ENCODE measurements at regions of chr7 and their contacts with region 1.

Region 1: DNA sequence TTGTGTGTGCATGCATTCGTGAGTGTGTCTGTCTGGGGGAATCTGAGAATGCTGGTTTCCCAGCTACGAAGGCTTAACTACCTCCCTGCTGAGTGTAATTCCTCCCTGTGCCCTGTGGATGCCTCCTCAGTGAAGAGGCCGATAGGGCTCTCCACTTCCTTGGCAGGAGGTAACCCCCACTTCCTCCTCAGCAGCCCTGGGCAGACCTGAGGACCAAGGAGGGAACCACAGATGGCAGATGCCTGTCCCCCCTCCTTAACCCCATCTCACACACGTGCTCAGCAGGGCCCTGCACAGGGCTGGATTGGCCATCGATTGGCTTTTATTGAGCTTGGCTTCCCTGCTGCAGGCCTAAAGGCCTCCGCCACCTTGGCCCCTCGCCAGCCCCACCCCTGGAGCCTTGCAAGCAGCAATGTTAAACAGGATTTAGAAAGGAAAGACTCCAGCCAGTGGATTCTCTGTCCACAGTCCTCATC is 45.6 kb upstream of the LRRC4 start:
- DNase-seq: no peak
- H3K4me3 ChIP-seq: no peak overlapping the region
- H3K27ac ChIP-seq: no peak overlapping the region
- H3K4me1 ChIP-seq: peaks cover 0 to 8% (median 0%) of the 10 kb centered on the region in 4 experiments; a peak in 3 of 7 replicates
- H3K27me3 ChIP-seq: no peaks in the 10 kb centered on the region
- CTCF ChIP-seq: no peak
- EP300 ChIP-seq: no peak
- POLR2A ChIP-seq: no peak
- RAD21 ChIP-seq: no peak

Region 2: DNA sequence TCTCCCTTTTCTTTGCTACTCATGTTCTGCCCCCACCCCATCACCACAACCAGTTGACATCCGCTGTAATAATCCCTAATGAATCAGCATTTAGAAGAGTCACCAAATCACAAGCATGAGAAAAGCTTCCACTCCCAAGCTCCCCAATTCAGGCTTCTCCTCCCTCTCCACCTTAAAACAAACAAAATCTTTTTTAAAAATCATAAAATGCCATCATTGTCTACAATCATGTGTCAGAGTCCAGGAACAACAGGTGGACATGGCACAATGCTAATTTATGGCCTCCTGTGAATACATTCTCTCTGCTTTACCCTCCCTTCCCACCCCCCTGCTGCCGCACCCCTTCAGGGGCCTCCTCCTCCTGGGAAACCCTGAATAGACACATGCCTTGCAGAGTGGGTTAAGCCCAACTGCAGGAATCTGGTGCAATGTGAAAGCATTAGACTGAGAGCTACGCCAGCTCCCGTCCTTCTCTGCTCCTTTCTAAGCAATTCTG is 49.3 kb before region 1 on chr7:
- CTCF ChIA-PET with region 1: no interaction called
- POLR2A ChIA-PET with region 1: no interaction called
- DNase-seq: no peak
- H3K4me3 ChIP-seq: peak overlapping the region in 1 of 4 experiments; percentile 35; a peak in 1 of 8 replicates
- H3K27ac ChIP-seq: no peak overlapping the region
- H3K4me1 ChIP-seq: peaks cover 6 to 20% (median 11%) of the 10 kb centered on the region in 4 experiments
- H3K27me3 ChIP-seq: peaks cover 0 to 10% (median 4%) of the 10 kb centered on the region in 4 experiments; a peak in 5 of 7 replicates
- CTCF ChIP-seq: no peak
- EP300 ChIP-seq: no peak
- POLR2A ChIP-seq: no peak
- RAD21 ChIP-seq: no peak

Region 3: GRCh38 chr7:128041203-128041602 is 35.6 kb before region 1 on chr7:
- CTCF ChIA-PET with region 1: interaction called, 12 read pairs
- POLR2A ChIA-PET with region 1: no interaction called
- DNase-seq: no peak
- H3K4me3 ChIP-seq: no peak overlapping the region
- H3K27ac ChIP-seq: no peak overlapping the region
- H3K4me1 ChIP-seq: no peaks in the 10 kb centered on the region
- H3K27me3 ChIP-seq: no peaks in the 10 kb centered on the region
- CTCF ChIP-seq: no peak
- EP300 ChIP-seq: no peak
- POLR2A ChIP-seq: no peak
- RAD21 ChIP-seq: no peak

Region 4: DNA sequence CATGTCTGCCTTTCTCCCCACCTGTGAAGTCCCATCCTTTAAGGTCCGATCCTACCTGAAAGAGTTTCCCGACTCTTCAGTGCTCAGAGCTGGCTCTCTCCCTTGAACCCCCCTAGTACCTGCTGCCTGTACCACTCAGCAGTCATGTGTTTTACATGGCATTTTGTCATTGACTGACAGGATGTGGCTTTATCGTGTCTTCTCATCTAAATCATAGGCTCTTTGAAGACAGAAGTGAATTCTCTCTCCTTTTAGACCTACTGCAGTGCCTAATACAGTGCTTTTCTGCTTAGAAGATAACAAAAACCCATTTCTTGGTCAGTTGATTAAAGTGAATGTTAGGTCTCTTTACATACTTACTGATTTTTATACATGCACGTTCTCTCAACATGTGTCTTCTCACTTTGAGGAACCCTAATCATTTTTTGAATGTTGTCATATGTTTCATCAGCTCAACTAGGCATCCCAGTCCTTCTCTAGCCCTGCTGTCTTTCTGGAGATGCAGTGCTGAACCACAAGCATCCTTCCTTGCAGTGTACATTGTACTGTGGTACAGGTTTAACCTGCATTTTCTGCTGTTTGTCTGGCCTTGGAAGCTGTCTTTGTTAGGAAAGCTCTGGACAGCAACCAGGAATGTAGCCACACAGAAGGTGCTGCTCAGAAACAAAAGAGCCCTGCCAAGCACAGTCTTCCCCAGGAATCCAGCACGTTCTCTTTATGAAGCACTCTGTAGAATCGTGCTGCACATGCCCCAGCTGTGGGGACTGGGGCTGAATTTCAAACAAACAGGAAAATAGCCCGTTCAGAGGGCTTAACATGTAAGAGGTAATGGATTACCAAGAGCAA is 17.5 kb before region 1 on chr7:
- CTCF ChIA-PET with region 1: interaction called, 47 read pairs
- POLR2A ChIA-PET with region 1: no interaction called
- DNase-seq: no peak
- H3K4me3 ChIP-seq: no peak overlapping the region
- H3K27ac ChIP-seq: no peak overlapping the region
- H3K4me1 ChIP-seq: peaks cover 0 to 8% (median 2%) of the 10 kb centered on the region in 4 experiments; a peak in 1 of 7 replicates
- H3K27me3 ChIP-seq: no peaks in the 10 kb centered on the region
- CTCF ChIP-seq: no peak
- EP300 ChIP-seq: no peak
- POLR2A ChIP-seq: no peak
- RAD21 ChIP-seq: no peak